IMR-90 (cell line): ENCODE measurements at regions of chr12 and their contacts with region 1.

Region 1: GRCh38 chr12:52720437-52720836 is 17.1 kb upstream of the KRT77 start:
- DNase-seq: peak; percentile 38
- ATAC-seq: no peak
- H3K4me3 ChIP-seq: no peak overlapping the region
- H3K27ac ChIP-seq: no peak overlapping the region
- H3K4me1 ChIP-seq: no peaks in the 10 kb centered on the region
- H3K27me3 ChIP-seq: peaks cover 18% of the 10 kb centered on the region
- CTCF ChIP-seq: no peak
- POLR2A ChIP-seq: no peak
- RAD21 ChIP-seq: no peak

Region 2: GRCh38 chr12:52691076-52691840 is 29.2 kb before region 1 on chr12:
- CTCF ChIA-PET with region 1: no interaction called
- POLR2A ChIA-PET with region 1: no interaction called
- dilution Hi-C with region 1: no loop called
- in situ Hi-C with region 1: no loop called
- intact Hi-C with region 1: no loop called
- DNase-seq: no peak
- ATAC-seq: no peak
- H3K4me3 ChIP-seq: no peak overlapping the region
- H3K27ac ChIP-seq: no peak overlapping the region
- H3K4me1 ChIP-seq: peaks cover 2% of the 10 kb centered on the region; the same call in 1 of the 2 replicates
- H3K27me3 ChIP-seq: peaks cover 59% of the 10 kb centered on the region
- CTCF ChIP-seq: no peak
- POLR2A ChIP-seq: no peak
- RAD21 ChIP-seq: no peak

Region 3: GRCh38 chr12:52865090-52865944 is 144.9 kb after region 1 on chr12:
- CTCF ChIA-PET with region 1: no interaction called
- POLR2A ChIA-PET with region 1: no interaction called
- dilution Hi-C with region 1: no loop called
- in situ Hi-C with region 1: no loop called
- intact Hi-C with region 1: loop called (anchors 10 kb)
- DNase-seq: peak; percentile 60
- ATAC-seq: peak; percentile 96
- H3K4me3 ChIP-seq: no peak overlapping the region
- H3K27ac ChIP-seq: no peak overlapping the region
- H3K4me1 ChIP-seq: no peaks in the 10 kb centered on the region
- H3K27me3 ChIP-seq: peaks cover 6% of the 10 kb centered on the region
- CTCF ChIP-seq: peak; percentile 84
- POLR2A ChIP-seq: no peak
- RAD21 ChIP-seq: peak; percentile 89